Posterior cingulate gyrus (tissue), 11 donors: ENCODE measurements at regions of chr2 and their contacts with region 1.

Region 1: GRCh38 chr2:102841107-102841840 is 79.4 kb downstream of the TMEM182 start:
- DNase-seq: peak; percentile 30 to 91 (median 64)

Region 2: GRCh38 chr2:102082571-102083392 is 758.5 kb before region 1 on chr2:
- intact Hi-C with region 1: no loop called
- DNase-seq: no peak

Region 3: DNA sequence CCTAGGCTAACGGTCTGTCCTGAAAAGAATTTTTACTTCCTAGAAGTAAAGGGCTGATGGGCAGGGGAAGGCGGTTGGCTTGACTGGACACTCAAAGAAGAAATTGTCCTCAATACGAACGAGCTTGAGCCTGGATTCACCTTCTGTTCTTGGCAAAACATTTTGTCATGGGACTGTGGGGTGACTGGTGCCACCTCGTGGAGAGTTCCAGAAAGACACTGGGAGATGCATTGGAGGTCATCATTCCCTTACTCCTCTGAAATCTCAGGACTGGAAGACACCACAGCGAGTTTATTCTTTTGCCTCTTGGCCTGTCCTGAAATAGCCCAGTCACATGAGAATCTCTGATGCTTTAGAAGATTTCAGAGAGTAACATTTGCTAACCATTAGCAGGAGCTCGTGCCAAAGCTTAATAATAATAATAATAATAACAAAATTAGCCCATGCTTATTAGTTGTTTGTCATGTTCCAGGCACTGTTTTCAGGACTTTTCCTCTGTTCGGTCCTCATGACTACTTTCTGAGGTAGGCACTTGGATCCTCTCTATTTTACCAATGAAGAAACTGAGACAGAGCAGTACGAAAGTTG is 34.9 kb before region 1 on chr2:
- intact Hi-C with region 1: no loop called
- DNase-seq: peak; percentile 34 to 92 (median 64)

Region 4: DNA sequence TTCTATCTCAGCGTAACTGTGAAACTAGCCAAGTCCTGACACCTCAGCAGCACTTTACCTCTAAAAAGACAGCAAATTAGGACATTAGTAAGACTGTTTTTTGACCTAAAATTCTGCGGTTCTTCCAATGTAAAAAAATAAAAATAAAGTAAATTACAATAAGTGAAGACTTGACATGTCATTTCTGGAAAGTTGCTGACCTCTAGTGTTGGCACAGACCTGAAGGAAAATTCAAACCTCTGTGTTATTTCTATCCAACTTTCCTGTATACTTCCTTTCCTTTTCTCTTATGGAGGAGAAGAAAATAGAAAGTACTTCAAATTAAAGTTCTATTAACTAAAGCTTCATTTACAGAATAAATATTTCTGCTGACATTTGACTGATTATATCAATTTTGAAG is 31.1 kb after region 1 on chr2:
- intact Hi-C with region 1: loop called (anchors 2 kb)
- DNase-seq: no peak

Region 5: DNA sequence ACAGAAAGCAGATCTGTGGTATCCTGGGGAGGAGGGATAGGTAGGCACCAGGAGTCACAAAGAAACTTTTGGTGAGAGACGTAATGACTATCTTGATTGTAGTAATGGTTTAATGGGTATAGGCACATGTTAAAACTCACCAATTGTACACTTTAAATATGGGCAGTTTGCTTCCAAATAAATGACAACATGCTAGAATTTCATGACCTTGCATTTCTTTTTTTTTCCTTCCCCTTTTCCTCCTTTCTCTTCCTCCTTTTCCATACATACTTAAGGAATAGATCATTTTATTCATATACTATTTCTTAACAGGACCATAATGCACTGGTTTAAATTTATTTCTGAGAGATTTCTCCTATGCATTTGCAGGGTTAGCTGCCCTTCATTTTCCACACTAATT is 262.4 kb after region 1 on chr2:
- intact Hi-C with region 1: no loop called
- DNase-seq: no peak